PC-9 (cell line): ENCODE measurements at regions of chr3 and their contacts with region 1.

Region 1: GRCh38 chr3:126357295-126358037 is at the start of gene KLF15:
- DNase-seq: peak in 1 of 2 experiments; percentile 83
- H3K4me3 ChIP-seq: peak within 1 kb of the TSS; percentile 42; the same call in 1 of the 2 replicates
- H3K27ac ChIP-seq: no peak within 1 kb of the TSS
- H3K4me1 ChIP-seq: no peaks in the 10 kb centered on the region
- H3K27me3 ChIP-seq: peaks cover 30% of the 10 kb centered on the region
- CTCF ChIP-seq: no peak
- total RNA-seq, gene KLF15: 0.65 and 0.70 TPM in 2 replicates

Region 2: GRCh38 chr3:126267226-126267975 is 90.1 kb before region 1 on chr3:
- CTCF ChIA-PET with region 1: no interaction called
- POLR2A ChIA-PET with region 1: no interaction called
- intact Hi-C with region 1: loop called (anchors 10 kb)
- DNase-seq: peak; percentile 63 to 92
- H3K4me3 ChIP-seq: peak overlapping the region; percentile 51; the same call in 1 of the 2 replicates
- H3K27ac ChIP-seq: no peak overlapping the region
- H3K4me1 ChIP-seq: no peaks in the 10 kb centered on the region
- H3K27me3 ChIP-seq: no peaks in the 10 kb centered on the region; the same call in 1 of the 2 replicates
- CTCF ChIP-seq: no peak